Heart right ventricle (tissue), 16 donors: ENCODE measurements at regions of chr20 and their contacts with region 1.

Region 1: GRCh38 chr20:23061734-23062561 is 12.5 kb upstream of the THBD start:
- DNase-seq: peak; percentile 44 to 69
- ATAC-seq: peak; percentile 82 to 90 (median 86)
- H3K4me3 ChIP-seq: peak overlapping the region in 1 of 10 donors; percentile 18
- H3K27ac ChIP-seq: peak overlapping the region in 9 of 10 donors; percentile 46 to 84 (median 77)
- H3K4me1 ChIP-seq: peaks cover 22 to 51% (median 47%) of the 10 kb centered on the region in 9 donors
- H3K27me3 ChIP-seq: no peaks in the 10 kb centered on the region
- CTCF ChIP-seq: peak; percentile 26 to 72 (median 53)

Region 2: GRCh38 chr20:23132930-23133559 is 71.1 kb after region 1 on chr20:
- intact Hi-C with region 1: loop called in 2 of 10 experiments (anchors 5 to 10 kb)
- DNase-seq: peak; percentile 65 to 80
- ATAC-seq: peak; percentile 72 to 94 (median 84)
- H3K4me3 ChIP-seq: no peak overlapping the region
- H3K27ac ChIP-seq: peak overlapping the region; percentile 9 to 88 (median 76)
- H3K4me1 ChIP-seq: peaks cover 2 to 79% (median 52%) of the 10 kb centered on the region in 9 donors
- H3K27me3 ChIP-seq: no peaks in the 10 kb centered on the region
- CTCF ChIP-seq: no peak